Psoas muscle (tissue), 8 donors: ENCODE measurements at regions of chr10 and their contacts with region 1.

Region 1: DNA sequence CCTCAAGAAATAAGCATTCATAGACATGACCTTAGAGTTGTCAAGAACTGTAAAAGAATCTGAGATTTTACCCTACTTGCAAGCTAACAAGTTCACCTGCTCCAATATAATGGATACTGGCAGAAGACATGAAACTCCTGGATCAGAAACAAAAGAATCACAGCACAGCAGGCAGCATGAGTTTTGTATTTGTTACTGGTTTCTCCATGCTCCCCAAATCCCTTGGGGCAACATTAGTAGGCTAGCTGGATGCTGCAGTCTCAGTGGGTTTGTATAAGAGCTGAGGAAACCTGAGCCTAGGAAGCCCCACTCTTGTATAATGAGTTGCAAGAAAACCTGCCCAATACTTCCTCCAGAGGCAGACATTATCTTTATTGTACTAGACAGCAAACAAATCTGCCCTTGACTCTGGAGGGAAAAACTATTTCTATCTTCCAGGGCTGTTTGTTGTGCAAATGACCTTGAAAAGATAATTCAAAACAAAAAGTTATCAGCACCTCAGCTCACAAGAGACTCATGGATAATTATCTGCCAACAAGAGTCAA is 64.8 kb downstream of the ABLIM1 start:
- DNase-seq: no peak
- ATAC-seq: no peak
- H3K4me3 ChIP-seq: no peak overlapping the region
- H3K27ac ChIP-seq: no peak overlapping the region
- H3K4me1 ChIP-seq: no peaks in the 10 kb centered on the region
- H3K27me3 ChIP-seq: no peaks in the 10 kb centered on the region
- CTCF ChIP-seq: no peak

Region 2: GRCh38 chr10:114623661-114624294 is 30.5 kb after region 1 on chr10:
- intact Hi-C with region 1: loop called in 1 of 2 experiments (anchors 1 kb)
- DNase-seq: no peak
- ATAC-seq: peak; percentile 57 to 85 (median 64)
- H3K4me3 ChIP-seq: no peak overlapping the region
- H3K27ac ChIP-seq: no peak overlapping the region
- H3K4me1 ChIP-seq: no peaks in the 10 kb centered on the region
- H3K27me3 ChIP-seq: no peaks in the 10 kb centered on the region
- CTCF ChIP-seq: no peak